MCF 10A (cell line): ENCODE measurements at regions of chr9 and their contacts with region 1.

Region 1: GRCh38 chr9:35510745-35511428 is 21.0 kb downstream of the RUSC2 start:
- DNase-seq: peak; percentile 91
- H3K4me3 Mint-ChIP-seq: no peak overlapping the region
- H3K27ac Mint-ChIP-seq: peak overlapping the region; percentile 78
- H3K4me1 Mint-ChIP-seq: peaks cover 39% of the 10 kb centered on the region
- H3K27me3 Mint-ChIP-seq: no peaks in the 10 kb centered on the region
- CTCF ChIP-seq: peak; percentile 16

Region 2: DNA sequence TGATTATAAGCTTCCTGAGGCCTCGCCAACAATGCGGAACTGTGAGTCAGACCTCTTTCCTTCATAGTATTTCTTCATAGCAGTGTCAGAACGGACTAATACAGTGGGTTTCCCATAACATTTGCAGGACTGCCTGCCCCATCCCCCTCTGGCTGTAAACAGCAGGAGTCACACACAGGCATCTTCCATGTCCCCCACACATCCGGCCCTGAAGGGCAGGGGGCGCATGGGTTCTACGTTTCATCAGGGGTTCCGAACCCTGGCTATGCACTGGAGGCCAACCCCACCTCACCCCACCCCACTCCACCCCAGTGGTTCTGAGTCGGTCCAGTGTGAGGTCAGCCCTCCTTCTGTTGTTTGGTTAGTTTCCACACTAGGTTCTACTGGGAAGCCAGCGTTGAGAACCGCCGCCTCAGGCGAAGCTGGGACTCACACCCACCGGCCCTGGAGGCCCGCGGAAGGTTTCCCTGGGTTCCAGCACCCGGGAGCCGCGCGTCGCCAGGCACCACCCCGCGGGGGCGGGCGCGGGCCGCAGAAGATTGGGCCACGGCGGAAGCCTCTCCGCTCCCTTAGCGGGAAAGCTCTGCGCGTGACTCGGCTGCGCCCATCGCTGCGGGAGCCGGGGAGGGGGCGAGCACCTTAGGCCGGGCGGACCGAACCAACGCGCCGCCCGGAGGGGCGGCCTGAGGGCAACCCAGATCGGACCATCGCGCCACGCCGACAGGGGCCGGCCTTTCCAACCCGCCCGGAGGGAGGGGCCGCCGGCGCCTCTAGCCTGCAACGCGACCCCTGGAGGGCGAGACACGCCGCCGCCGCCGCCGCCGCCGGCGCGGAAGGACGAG is 21.4 kb before region 1 on chr9 and contains the start of gene RUSC2:
- CTCF ChIA-PET with region 1: interaction called, 7 read pairs
- POLR2A ChIA-PET with region 1: interaction called, 12 read pairs
- intact Hi-C with region 1: loop called (anchors 1 kb)
- DNase-seq: peak; percentile 85
- H3K4me3 Mint-ChIP-seq: peak within 1 kb of the TSS; percentile 93
- H3K27ac Mint-ChIP-seq: peak within 1 kb of the TSS; percentile 97
- H3K4me1 Mint-ChIP-seq: peaks cover 23% of the 10 kb centered on the region
- H3K27me3 Mint-ChIP-seq: no peaks in the 10 kb centered on the region
- CTCF ChIP-seq: peak; percentile 20
- total RNA-seq, gene RUSC2: 27.8 and 30.5 TPM in 2 replicates

Region 3: DNA sequence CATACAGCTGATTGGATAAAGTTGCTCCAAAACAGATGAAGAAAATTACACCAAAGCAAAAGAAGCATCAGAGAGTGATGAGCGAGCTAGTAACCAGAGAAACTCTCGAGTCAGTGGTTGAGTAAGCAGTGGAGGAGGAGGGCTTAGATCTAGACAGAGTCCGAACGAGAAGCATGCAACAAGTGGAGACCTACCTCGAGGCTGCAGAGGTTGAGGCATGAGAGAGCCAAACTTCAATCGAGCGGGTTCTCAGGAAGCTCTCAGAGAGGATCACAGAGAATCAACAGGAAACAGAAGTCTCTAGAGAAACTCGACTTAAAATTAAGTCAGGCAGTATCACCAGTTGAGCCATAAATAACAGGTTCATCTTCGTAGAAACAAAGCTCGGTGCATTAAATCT is 14.9 kb before region 1 on chr9:
- CTCF ChIA-PET with region 1: interaction called, 11 read pairs
- POLR2A ChIA-PET with region 1: interaction called, 12 read pairs
- intact Hi-C with region 1: loop called (anchors 2 kb)
- DNase-seq: no peak
- H3K4me3 Mint-ChIP-seq: no peak overlapping the region
- H3K27ac Mint-ChIP-seq: no peak overlapping the region
- H3K4me1 Mint-ChIP-seq: peaks cover 13% of the 10 kb centered on the region
- H3K27me3 Mint-ChIP-seq: no peaks in the 10 kb centered on the region
- CTCF ChIP-seq: no peak

Region 4: DNA sequence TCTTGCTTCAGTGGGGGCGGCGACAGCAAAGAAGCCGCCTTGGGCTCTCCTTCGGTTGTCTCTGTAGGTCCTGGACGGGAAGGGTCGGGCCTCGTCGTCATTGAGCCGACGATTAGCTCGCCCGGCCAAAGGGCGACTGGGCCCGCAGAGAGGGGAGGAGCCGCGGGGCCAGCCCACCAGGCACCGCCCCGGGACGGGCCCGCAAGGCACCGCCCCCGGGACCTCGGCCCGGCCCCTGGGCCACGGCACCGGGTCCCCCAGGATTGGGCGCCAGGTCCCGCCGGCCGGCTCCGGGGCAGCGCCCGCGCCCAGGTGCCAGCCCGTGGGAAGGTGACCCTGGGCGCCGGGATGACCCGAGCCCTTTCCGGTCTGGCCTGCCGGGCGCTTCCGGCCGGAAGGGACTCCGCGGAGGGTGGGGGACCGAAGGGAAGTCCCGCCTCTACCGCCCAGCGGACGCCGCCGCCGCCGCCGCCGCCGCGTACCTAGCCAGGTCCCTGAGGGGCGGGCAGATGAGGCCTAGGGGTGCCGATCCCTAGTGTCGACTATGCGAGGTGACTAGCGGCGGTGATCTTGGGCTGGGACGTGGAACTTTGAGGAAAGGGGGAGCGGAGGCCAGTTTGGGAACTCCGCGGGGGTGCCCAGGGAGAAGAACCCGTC is 238.1 kb after region 1 on chr9 and contains the starts of genes GBA2 and RGP1:
- CTCF ChIA-PET with region 1: no interaction called
- POLR2A ChIA-PET with region 1: no interaction called
- intact Hi-C with region 1: no loop called
- DNase-seq: peak; percentile 77
- H3K4me3 Mint-ChIP-seq: peak within 1 kb of the TSS; percentile 94
- H3K27ac Mint-ChIP-seq: peak within 1 kb of the TSS; percentile 85
- H3K4me1 Mint-ChIP-seq: peaks cover 31% of the 10 kb centered on the region
- H3K27me3 Mint-ChIP-seq: no peaks in the 10 kb centered on the region
- CTCF ChIP-seq: no peak
- total RNA-seq, gene GBA2: 51.3 and 55.2 TPM in 2 replicates
- total RNA-seq, gene RGP1: 33.8 and 35.8 TPM in 2 replicates

Region 5: GRCh38 chr9:35790385-35791296 is 279.8 kb after region 1 on chr9:
- CTCF ChIA-PET with region 1: no interaction called
- POLR2A ChIA-PET with region 1: no interaction called
- intact Hi-C with region 1: no loop called
- DNase-seq: peak; percentile 78
- H3K4me3 Mint-ChIP-seq: no peak overlapping the region
- H3K27ac Mint-ChIP-seq: no peak overlapping the region
- H3K4me1 Mint-ChIP-seq: peaks cover 6% of the 10 kb centered on the region
- H3K27me3 Mint-ChIP-seq: no peaks in the 10 kb centered on the region
- CTCF ChIP-seq: peak; percentile 69